Activated T-helper 1 cell treated with anti-CD3 and anti-CD28 coated beads, Interleukin-12 subunit alpha, Interleukin-12 subunit beta, Interleukin-2, Interleukin-4 antibody, amounts not matched to agents 30 ng/mL and 10 ng/mL and 1 ng/mL, durations not matched to agents 14 hours and 24 hours and 36 hours (primary cell): ENCODE measurements at regions of chr11 and their contacts with region 1.

Region 1: DNA sequence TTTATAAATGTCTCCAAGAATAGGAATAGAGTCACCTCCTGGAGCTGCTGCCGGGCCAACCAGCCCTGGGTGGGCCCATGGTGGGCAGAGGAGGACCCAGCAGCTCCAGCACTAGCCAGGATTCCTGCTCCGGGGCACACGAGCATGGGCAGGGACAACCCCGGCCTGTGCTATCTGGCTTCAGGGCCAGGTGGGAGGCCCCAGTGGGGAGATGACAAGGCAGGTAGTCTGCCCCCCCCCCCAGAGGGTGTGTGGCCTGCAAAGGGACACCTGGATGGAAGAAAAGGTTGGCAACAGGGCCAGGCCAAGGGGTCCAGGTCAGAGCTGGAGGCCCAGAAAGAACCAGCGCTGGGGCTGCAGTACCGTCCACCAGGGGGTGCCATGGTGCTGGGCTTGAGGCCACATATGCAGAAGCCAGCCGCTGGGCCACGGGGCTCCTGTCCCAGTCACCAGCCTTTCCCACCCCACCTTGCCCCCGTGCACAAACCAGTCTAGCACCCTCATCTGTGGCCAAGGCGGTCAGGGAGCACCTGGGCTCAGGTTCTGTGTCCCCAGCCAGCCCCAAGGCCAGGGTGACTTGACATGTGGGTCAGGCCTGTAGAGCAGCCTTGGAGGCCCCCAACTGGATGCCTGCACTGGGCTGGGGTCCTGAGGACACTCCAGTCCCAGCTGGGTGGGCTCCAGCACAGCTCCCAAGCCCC is 3.5 kb downstream of the TSPAN32 start:
- DNase-seq: peak; percentile 69
- H3K4me3 Mint-ChIP-seq: no peak overlapping the region
- H3K27ac Mint-ChIP-seq: peak overlapping the region; percentile 86
- H3K4me1 Mint-ChIP-seq: peaks cover 33% of the 10 kb centered on the region
- H3K27me3 Mint-ChIP-seq: no peaks in the 10 kb centered on the region

Region 2: DNA sequence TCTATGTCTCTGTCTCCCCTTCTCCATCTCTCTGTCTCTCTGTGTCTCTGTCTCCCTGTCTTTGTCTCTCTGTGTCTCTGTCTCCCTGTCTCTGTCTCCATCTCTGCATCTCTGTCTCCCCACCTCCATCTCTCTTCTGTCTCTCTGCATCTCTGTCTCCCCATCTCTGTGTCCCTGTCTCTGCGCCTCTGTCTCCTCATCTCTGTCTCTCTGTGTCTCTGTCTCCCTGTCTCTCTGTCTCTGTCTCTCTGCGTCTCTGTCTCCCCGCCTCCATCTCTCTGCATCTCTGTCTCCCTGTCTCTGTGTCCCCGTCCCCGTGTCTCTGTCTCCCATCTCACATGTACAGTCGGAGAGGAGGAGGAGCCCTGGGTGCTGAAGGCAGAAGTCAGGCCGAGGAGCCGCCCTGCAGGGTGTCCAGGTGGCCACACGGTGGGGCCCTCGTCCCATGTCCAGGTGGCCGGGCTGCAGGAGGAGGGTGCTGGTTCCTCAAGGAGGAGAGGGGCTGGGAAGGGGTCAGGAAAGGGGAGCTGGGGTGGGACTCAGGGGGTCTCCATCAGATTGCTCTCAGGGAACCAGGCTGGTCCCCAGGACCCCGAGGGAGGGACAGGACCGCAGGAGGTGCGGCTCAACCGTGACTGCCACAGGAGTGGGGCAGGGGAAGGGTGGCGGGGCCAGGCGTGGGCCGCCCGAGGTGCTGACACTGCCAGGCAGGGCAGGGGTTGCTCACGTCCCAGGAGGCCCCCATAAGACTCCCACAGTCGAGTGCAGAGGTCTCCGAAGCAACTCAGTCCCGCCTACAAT is 108.1 kb before region 1 on chr11:
- intact Hi-C with region 1: loop called (anchors 1 kb)
- DNase-seq: peak; percentile 55
- H3K4me3 Mint-ChIP-seq: no peak overlapping the region
- H3K27ac Mint-ChIP-seq: peak overlapping the region; percentile 6
- H3K4me1 Mint-ChIP-seq: no peaks in the 10 kb centered on the region
- H3K27me3 Mint-ChIP-seq: peaks cover 4% of the 10 kb centered on the region

Region 3: DNA sequence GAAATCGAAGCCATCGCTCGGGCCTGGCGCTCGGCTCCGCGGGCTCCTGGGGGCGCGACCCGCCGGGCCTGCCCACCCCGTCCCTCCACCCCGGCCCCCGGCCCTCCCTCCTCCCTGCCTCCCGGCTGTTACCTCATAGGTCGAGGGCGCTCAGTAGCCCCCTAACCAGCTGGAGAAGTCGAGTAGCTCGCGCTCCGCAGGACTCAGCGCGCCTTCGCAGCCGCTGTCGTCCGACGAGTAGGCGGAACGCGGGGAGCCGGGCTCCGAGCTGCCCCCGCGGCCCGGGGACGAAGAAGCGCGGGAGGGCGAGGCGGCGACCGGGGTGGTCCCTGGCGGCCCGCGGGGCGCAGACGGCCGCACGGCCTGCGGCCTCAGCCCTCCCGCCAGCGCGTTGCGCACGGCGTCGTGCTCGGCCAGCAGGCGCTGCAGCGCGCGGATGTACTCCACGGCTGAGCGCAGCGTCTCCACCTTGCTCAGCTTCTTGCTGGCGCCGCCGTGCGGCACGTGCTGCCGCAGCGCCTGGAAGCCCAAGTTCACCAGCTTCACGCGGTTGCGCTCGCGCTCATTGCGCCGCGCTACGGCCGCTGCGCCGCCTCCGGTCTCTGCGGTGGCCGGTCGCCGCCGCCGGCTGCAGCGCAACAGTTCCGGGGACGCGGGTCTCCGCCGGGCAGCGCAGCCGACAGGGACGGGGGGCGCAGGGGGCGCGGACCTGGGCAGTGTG is 35.5 kb before region 1 on chr11:
- intact Hi-C with region 1: loop called (anchors 1 kb)
- DNase-seq: peak; percentile 25
- H3K4me3 Mint-ChIP-seq: no peak overlapping the region
- H3K27ac Mint-ChIP-seq: no peak overlapping the region
- H3K4me1 Mint-ChIP-seq: peaks cover 16% of the 10 kb centered on the region
- H3K27me3 Mint-ChIP-seq: peaks cover 32% of the 10 kb centered on the region

Region 4: DNA sequence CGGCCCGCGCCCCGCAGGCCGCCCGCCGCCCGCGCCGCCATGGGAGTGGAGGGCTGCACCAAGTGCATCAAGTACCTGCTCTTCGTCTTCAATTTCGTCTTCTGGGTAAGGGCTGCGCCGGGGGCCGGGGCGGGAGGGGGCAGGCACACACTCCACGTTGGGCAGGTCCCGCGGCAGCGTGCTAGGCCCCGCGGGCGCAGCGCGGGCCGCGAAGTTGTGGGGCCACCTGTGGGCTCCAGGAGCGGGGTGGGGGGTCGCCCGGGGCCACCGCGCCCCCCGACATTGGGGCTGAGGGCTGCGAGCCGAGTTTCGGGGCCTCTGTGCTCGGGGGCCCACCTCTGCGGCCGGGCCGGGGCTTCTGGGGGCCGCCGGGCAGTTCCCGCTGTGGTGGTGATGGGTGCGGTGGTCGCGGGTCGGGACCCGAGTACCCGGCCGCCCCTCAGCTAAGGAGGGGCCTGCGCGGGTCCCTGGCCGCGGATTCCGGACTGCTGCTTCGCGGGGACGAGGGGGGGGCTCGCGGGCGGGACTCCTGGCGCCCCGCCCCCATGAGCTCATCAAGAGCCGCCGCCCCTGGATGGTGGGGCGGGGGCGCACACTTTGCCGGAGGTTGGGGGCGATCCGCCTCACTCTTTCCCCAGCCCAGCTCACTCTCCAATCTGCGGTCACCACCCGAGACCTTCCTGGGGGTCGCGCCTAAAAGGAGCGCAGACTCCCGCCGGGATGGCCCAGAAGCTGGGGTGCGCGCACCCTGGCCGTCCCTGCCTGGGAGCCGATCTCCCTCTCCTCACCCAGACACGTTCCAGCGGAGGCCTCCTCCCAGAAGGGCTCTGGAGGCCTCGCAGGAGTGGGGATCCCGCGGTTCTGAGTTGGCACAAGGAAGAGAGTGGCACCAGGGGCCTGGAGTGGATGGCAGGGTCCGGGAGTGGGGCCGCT is 72.5 kb after region 1 on chr11:
- intact Hi-C with region 1: loop called (anchors 1 kb)
- DNase-seq: peak; percentile 44
- H3K4me3 Mint-ChIP-seq: peak overlapping the region; percentile 90
- H3K27ac Mint-ChIP-seq: peak overlapping the region; percentile 87
- H3K4me1 Mint-ChIP-seq: peaks cover 10% of the 10 kb centered on the region
- H3K27me3 Mint-ChIP-seq: peaks cover 4% of the 10 kb centered on the region

Region 5: GRCh38 chr11:2420502-2421225 is 115.4 kb after region 1 on chr11:
- intact Hi-C with region 1: loop called (anchors 1 kb)
- DNase-seq: peak; percentile 56
- H3K4me3 Mint-ChIP-seq: no peak overlapping the region
- H3K27ac Mint-ChIP-seq: no peak overlapping the region
- H3K4me1 Mint-ChIP-seq: no peaks in the 10 kb centered on the region
- H3K27me3 Mint-ChIP-seq: no peaks in the 10 kb centered on the region